ENCODE measurements at regions of chr9 and their contacts with region 1.

Region 1: DNA sequence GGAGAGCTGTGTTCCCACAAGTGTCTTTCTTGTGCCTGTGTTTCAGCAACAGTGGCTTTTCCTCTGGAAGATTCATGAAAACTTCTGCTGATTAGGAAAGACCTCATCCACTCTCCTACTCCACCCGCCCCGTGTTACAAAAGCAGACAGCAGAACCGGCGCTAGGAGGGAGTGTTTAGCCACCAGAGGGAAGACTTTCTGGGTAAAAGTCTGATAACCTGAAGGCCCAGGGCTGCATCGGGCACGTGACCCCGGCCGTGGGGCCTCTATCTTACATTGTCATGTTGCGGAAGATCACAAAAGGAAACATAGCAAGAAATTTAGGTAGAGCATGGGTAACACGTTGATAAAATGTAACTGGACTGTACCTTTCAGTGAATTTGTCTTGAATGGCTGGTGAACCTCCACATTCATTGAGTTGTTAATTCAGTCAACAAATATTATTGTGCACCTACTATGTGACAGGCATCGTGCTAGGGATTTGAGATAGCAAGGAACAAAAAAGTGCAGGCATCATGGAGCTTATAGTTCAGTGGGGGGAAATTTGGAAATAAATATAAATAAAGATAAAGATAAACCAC is 31.9 kb upstream of the DMRT2 start:
- DNase-seq: no peak
- ATAC-seq: peak; percentile 93
- H3K4me3 ChIP-seq: no peak overlapping the region
- H3K27ac ChIP-seq: no peak overlapping the region
- H3K4me1 ChIP-seq: no peaks in the 10 kb centered on the region
- H3K27me3 ChIP-seq: peaks cover 3% of the 10 kb centered on the region in 2 experiments; a peak in 3 of 4 replicates
- CTCF ChIP-seq: peak; percentile 25 to 49 (median 33); a peak in 5 of 6 replicates
- EP300 ChIP-seq: no peak
- POLR2A ChIP-seq: no peak
- RAD21 ChIP-seq: peak; percentile 46; the same call in 1 of the 2 replicates

Region 2: DNA sequence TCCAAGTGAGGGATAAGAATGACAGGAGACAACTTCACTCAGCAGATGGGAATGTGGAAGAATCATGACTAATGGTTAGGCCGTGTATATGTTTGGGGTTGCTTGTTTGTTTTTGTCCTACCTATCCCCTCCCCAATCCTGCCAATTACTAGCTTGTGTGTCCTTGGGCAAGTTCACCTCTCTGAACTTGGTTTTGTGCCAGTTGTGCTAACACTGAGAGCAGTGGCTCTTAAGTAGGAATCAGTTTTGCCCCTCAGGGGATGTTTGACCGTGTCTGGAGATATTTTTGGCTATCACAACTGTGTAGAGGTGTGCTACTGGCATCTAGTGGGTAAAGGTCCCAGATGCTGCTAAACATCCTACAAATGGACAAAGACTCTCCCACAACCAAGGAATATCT is 318.9 kb after region 1 on chr9:
- CTCF ChIA-PET with region 1: interaction called, 3 read pairs
- POLR2A ChIA-PET with region 1: no interaction called
- RAD21 ChIA-PET with region 1: interaction called, 3 read pairs
- SMC1A ChIA-PET with region 1: interaction called, 8 read pairs
- in situ Hi-C with region 1: no loop called
- intact Hi-C with region 1: loop called (anchors 2 kb)
- DNase-seq: no peak
- ATAC-seq: peak; percentile 51
- H3K4me3 ChIP-seq: no peak overlapping the region
- H3K27ac ChIP-seq: no peak overlapping the region
- H3K4me1 ChIP-seq: no peaks in the 10 kb centered on the region
- H3K27me3 ChIP-seq: no peaks in the 10 kb centered on the region
- CTCF ChIP-seq: no peak; a peak in 1 of 6 replicates
- EP300 ChIP-seq: no peak
- POLR2A ChIP-seq: no peak
- RAD21 ChIP-seq: no peak

Region 3: DNA sequence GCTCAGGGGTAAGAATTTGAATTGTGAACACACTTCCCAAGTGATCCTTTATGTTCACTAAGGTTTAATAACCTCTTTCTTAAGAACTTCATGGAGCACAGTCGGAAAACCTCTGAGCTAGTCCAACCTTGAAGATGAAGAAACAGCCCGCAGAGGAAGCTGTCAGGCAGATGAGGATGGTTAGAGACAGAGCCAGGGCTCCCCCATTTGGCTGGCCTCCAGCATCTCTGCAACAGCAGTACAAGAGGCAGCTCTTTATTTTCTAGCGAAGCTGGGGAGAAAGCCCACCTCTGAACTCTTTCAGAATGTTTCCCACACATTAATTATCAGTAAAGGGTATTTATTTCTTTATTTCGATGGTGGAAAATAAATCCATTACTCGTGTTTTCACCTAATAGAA is 382.8 kb after region 1 on chr9:
- CTCF ChIA-PET with region 1: interaction called, 23 read pairs
- POLR2A ChIA-PET with region 1: interaction called, 3 read pairs
- RAD21 ChIA-PET with region 1: interaction called, 18 read pairs
- SMC1A ChIA-PET with region 1: interaction called, 28 read pairs
- in situ Hi-C with region 1: no loop called
- intact Hi-C with region 1: no loop called
- DNase-seq: no peak
- ATAC-seq: peak; percentile 67
- H3K4me3 ChIP-seq: no peak overlapping the region
- H3K27ac ChIP-seq: no peak overlapping the region
- H3K4me1 ChIP-seq: no peaks in the 10 kb centered on the region
- H3K27me3 ChIP-seq: no peaks in the 10 kb centered on the region
- CTCF ChIP-seq: peak in 1 of 3 experiments; percentile 26; a peak in 2 of 6 replicates
- EP300 ChIP-seq: no peak
- POLR2A ChIP-seq: no peak
- RAD21 ChIP-seq: no peak

Region 4: DNA sequence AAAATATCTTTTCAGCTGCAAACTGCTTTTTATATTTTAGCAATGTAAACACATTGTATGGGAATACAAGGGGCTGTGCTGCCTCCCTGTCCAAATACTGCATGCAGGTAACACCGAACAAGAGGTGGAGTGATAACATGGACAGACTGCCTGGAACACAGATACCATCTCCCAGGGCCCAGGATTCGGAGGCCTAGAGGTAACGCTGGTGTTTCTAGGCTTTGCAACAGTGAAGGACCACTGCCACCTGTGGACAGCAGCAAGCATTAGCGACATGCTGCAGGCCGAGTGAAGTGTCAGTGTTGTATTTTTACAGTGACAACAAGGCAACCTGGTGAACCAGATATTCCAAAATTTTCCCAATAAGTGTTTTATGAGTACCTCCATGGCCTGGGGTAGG is 411.1 kb after region 1 on chr9:
- CTCF ChIA-PET with region 1: interaction called, 6 read pairs
- POLR2A ChIA-PET with region 1: no interaction called
- RAD21 ChIA-PET with region 1: interaction called, 8 read pairs
- SMC1A ChIA-PET with region 1: interaction called, 14 read pairs
- in situ Hi-C with region 1: no loop called
- intact Hi-C with region 1: loop called (anchors 2 kb)
- DNase-seq: no peak
- ATAC-seq: peak; percentile 77
- H3K4me3 ChIP-seq: no peak overlapping the region
- H3K27ac ChIP-seq: no peak overlapping the region
- H3K4me1 ChIP-seq: no peaks in the 10 kb centered on the region
- H3K27me3 ChIP-seq: no peaks in the 10 kb centered on the region
- CTCF ChIP-seq: peak in 2 of 3 experiments; percentile 5 to 52; a peak in 2 of 6 replicates
- EP300 ChIP-seq: no peak
- POLR2A ChIP-seq: no peak
- RAD21 ChIP-seq: peak; percentile 21; the same call in 1 of the 2 replicates